ENCODE measurements at regions of chr13 and their contacts with region 1.

Region 1: GRCh38 chr13:110615322-110616102 is at the start of gene NAXD:
- DNase-seq: peak; percentile 94
- H3K4me3 Mint-ChIP-seq: peak within 1 kb of the TSS; percentile 95
- H3K27ac Mint-ChIP-seq: peak within 1 kb of the TSS; percentile 95
- H3K4me1 Mint-ChIP-seq: peaks cover 26% of the 10 kb centered on the region
- H3K27me3 Mint-ChIP-seq: peaks cover 2% of the 10 kb centered on the region
- total RNA-seq, gene NAXD: 20.6 and 23.7 TPM in 2 replicates

Region 2: GRCh38 chr13:110220471-110220870 is 395.0 kb before region 1 on chr13:
- intact Hi-C with region 1: loop called (anchors 5 kb)
- DNase-seq: no peak
- H3K4me3 Mint-ChIP-seq: no peak overlapping the region
- H3K27ac Mint-ChIP-seq: no peak overlapping the region
- H3K4me1 Mint-ChIP-seq: no peaks in the 10 kb centered on the region
- H3K27me3 Mint-ChIP-seq: peaks cover 24% of the 10 kb centered on the region

Region 3: DNA sequence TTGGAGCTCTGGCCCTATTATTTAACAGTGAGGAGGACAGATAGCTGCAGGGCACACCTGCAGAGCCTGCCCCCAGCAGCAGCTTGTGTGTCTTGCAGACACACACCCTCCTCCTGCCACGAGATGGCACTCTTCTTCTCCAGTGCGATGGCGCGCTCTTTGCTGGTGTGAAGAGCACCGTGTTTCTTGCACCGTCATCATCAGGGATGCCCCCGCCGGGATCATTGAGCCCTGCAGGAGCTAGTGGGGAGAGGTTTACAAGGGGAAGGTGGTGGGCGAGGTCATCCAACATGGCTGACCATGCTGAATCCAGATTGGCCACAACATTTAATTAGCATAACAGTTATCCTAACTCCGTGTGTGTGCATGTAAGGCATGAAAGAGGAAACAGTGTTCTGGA is 159.6 kb before region 1 on chr13:
- intact Hi-C with region 1: loop called (anchors 5 kb)
- DNase-seq: peak; percentile 89
- H3K4me3 Mint-ChIP-seq: peak overlapping the region; percentile 64
- H3K27ac Mint-ChIP-seq: peak overlapping the region; percentile 2
- H3K4me1 Mint-ChIP-seq: peaks cover 4% of the 10 kb centered on the region
- H3K27me3 Mint-ChIP-seq: peaks cover 22% of the 10 kb centered on the region

Region 4: GRCh38 chr13:110561344-110562035 is 54.0 kb before region 1 on chr13 and contains the start of gene RAB20:
- intact Hi-C with region 1: loop called (anchors 5 kb)
- DNase-seq: peak; percentile 91
- H3K4me3 Mint-ChIP-seq: peak within 1 kb of the TSS; percentile 87
- H3K27ac Mint-ChIP-seq: peak within 1 kb of the TSS; percentile 82
- H3K4me1 Mint-ChIP-seq: peaks cover 26% of the 10 kb centered on the region
- H3K27me3 Mint-ChIP-seq: peaks cover 38% of the 10 kb centered on the region
- total RNA-seq, gene RAB20: 2.8 and 3.2 TPM in 2 replicates

Region 5: GRCh38 chr13:110715395-110716235 is 100.1 kb after region 1 on chr13:
- intact Hi-C with region 1: loop called (anchors 1 kb)
- DNase-seq: peak; percentile 98
- H3K4me3 Mint-ChIP-seq: peak overlapping the region; percentile 96
- H3K27ac Mint-ChIP-seq: peak overlapping the region; percentile 95
- H3K4me1 Mint-ChIP-seq: peaks cover 29% of the 10 kb centered on the region
- H3K27me3 Mint-ChIP-seq: peaks cover 2% of the 10 kb centered on the region